PC-9 (cell line): ENCODE measurements at regions of chr13 and their contacts with region 1.

Region 1: GRCh38 chr13:93328943-93329342 is 102.3 kb downstream of the GPC6 start:
- DNase-seq: no peak
- H3K4me3 ChIP-seq: no peak overlapping the region
- H3K27ac ChIP-seq: no peak overlapping the region
- H3K4me1 ChIP-seq: no peaks in the 10 kb centered on the region
- H3K27me3 ChIP-seq: no peaks in the 10 kb centered on the region
- CTCF ChIP-seq: no peak

Region 2: GRCh38 chr13:92873029-92873428 is 455.9 kb before region 1 on chr13:
- CTCF ChIA-PET with region 1: no interaction called
- POLR2A ChIA-PET with region 1: no interaction called
- intact Hi-C with region 1: no loop called
- DNase-seq: no peak
- H3K4me3 ChIP-seq: no peak overlapping the region
- H3K27ac ChIP-seq: no peak overlapping the region
- H3K4me1 ChIP-seq: no peaks in the 10 kb centered on the region
- H3K27me3 ChIP-seq: no peaks in the 10 kb centered on the region
- CTCF ChIP-seq: no peak

Region 3: GRCh38 chr13:93927431-93927830 is 598.5 kb after region 1 on chr13:
- CTCF ChIA-PET with region 1: no interaction called
- POLR2A ChIA-PET with region 1: interaction called, 11 read pairs
- intact Hi-C with region 1: no loop called
- DNase-seq: no peak
- H3K4me3 ChIP-seq: no peak overlapping the region
- H3K27ac ChIP-seq: no peak overlapping the region
- H3K4me1 ChIP-seq: no peaks in the 10 kb centered on the region
- H3K27me3 ChIP-seq: no peaks in the 10 kb centered on the region
- CTCF ChIP-seq: no peak